ENCODE measurements at regions of chr4 and their contacts with region 1.

Region 1: GRCh38 chr4:153318696-153319320 is 25.7 kb upstream of the MND1 start:
- DNase-seq: no peak
- H3K4me3 ChIP-seq: no peak overlapping the region
- H3K27ac ChIP-seq: no peak overlapping the region
- H3K4me1 ChIP-seq: no peaks in the 10 kb centered on the region
- H3K27me3 ChIP-seq: no peaks in the 10 kb centered on the region
- CTCF ChIP-seq: peak; percentile 66 to 80 (median 76)
- EP300 ChIP-seq: no peak
- POLR2A ChIP-seq: no peak

Region 2: GRCh38 chr4:152424977-152425376 is 893.8 kb before region 1 on chr4:
- intact Hi-C with region 1: no loop called
- DNase-seq: no peak
- H3K4me3 ChIP-seq: no peak overlapping the region
- H3K27ac ChIP-seq: no peak overlapping the region
- H3K4me1 ChIP-seq: no peaks in the 10 kb centered on the region
- H3K27me3 ChIP-seq: no peaks in the 10 kb centered on the region
- CTCF ChIP-seq: no peak
- EP300 ChIP-seq: no peak
- POLR2A ChIP-seq: no peak

Region 3: DNA sequence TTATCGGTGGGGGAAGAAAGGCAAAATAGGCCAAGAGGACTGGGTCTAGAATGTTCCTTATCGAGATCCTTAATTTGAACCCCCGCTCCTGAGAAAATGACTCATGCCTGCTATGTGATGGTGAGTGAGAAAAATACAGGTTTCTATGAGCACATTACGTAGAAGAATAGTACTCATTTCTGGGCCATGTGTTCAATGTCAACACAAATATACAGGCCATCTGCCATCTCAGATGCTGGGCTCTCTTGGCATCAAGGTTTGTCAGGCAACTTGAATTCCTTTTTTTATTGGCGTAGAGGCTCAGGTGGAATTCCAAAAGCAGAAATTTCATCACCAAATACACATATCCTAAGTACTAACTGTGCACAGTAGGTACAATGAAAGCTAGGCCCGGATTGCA is 196.0 kb before region 1 on chr4:
- intact Hi-C with region 1: no loop called
- DNase-seq: no peak
- H3K4me3 ChIP-seq: no peak overlapping the region
- H3K27ac ChIP-seq: no peak overlapping the region
- H3K4me1 ChIP-seq: peaks cover 5 to 16% (median 7%) of the 10 kb centered on the region in 4 donors
- H3K27me3 ChIP-seq: no peaks in the 10 kb centered on the region
- CTCF ChIP-seq: no peak
- EP300 ChIP-seq: no peak
- POLR2A ChIP-seq: no peak

Region 4: DNA sequence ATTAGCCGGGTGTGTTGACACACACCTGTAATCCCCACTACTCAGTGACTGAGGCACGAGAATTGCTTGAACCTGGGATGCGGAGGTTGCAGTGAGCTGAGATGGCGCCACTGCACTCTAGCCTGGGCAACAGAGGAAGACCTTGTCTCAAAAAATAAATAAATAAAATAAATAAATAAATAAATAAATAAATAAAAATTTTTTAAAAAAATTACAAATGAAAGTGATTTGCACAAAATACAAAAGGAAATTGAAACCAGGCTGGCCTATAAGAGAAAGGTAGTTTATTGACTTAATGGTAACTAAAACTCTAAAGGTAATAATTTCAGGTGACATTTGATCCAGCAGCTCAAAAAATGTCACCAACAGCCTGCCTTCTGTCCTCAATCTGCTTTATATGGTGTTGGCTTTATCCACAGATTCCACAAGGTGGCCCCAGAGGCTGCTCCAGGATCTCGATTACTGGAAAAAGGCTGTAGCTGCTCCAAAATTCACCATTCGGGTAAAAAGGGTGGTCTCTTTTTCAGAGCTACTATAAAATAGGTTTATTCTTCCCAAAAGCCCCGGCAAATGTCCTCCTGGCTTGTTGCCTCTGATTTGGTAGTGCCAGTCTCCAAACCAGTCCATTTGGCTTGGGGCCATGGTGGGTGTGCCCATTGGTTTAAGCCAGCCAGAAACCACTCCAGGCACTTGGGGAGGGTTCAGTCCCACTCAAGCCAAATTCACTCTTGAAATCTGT is 175.9 kb before region 1 on chr4:
- intact Hi-C with region 1: loop called (anchors 1 kb)
- DNase-seq: no peak
- H3K4me3 ChIP-seq: peak overlapping the region in 3 of 4 donors; percentile 6 to 36 (median 32)
- H3K27ac ChIP-seq: no peak overlapping the region
- H3K4me1 ChIP-seq: peaks cover 5 to 11% (median 10%) of the 10 kb centered on the region in 4 donors
- H3K27me3 ChIP-seq: no peaks in the 10 kb centered on the region
- CTCF ChIP-seq: peak; percentile 82 to 87 (median 83)
- EP300 ChIP-seq: no peak
- POLR2A ChIP-seq: no peak

Region 5: GRCh38 chr4:153204247-153205027 is 114.4 kb before region 1 on chr4 and contains the start of gene TRIM2:
- intact Hi-C with region 1: loop called (anchors 1 kb)
- DNase-seq: no peak
- H3K4me3 ChIP-seq: peak within 1 kb of the TSS; percentile 10 to 42 (median 22)
- H3K27ac ChIP-seq: peak within 1 kb of the TSS in 2 of 4 donors; percentile 34 to 53
- H3K4me1 ChIP-seq: peaks cover 0 to 18% (median 4%) of the 10 kb centered on the region in 4 donors
- H3K27me3 ChIP-seq: no peaks in the 10 kb centered on the region
- CTCF ChIP-seq: no peak
- EP300 ChIP-seq: no peak
- POLR2A ChIP-seq: no peak
- total RNA-seq, gene TRIM2: 28.3 to 36.9 (median 30.4) TPM

Region 6: DNA sequence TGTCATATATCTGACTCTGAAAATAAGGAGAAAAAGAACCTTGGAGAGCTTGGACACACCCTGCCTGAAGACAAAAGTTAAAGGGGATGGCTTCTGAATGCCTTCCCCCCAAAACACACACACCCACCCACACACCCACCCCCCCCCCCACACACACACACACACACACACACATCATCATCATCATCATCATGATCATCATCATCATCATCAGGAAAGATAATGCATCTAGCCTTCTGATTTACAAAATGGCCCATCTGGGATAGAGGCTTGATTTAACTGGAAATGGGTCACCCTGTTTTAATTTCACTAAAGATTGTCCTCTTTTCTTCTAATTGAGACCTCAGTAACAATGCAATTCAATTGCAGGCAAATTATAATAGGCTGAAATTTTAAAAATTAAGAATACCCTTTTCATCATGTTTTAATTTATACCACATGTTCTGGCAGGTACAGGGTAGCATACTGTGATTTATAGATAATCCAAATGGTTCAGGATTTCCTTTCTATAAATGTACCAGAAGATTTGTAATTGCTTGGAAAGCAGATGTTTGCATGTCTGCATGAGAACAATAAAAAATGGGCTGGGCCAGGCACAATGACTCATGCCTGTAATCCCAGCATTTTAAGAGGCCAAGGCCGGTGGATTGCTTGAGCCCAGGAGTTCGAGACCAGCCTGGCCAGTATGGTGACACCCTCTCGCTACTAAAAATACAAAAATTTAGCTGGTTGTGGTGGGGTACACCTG is 58.1 kb before region 1 on chr4:
- intact Hi-C with region 1: no loop called
- DNase-seq: no peak
- H3K4me3 ChIP-seq: no peak overlapping the region
- H3K27ac ChIP-seq: no peak overlapping the region
- H3K4me1 ChIP-seq: peaks cover 0 to 25% (median 19%) of the 10 kb centered on the region in 4 donors
- H3K27me3 ChIP-seq: no peaks in the 10 kb centered on the region
- CTCF ChIP-seq: no peak
- EP300 ChIP-seq: no peak
- POLR2A ChIP-seq: no peak

Measured in esophagus muscularis mucosa (tissue), 4 donors.